Right cardiac atrium (tissue), 5 donors: ENCODE measurements at regions of chr4 and their contacts with region 1.

Region 1: GRCh38 chr4:47933840-47934239 is 19.5 kb upstream of the NFXL1 start:
- DNase-seq: no peak
- ATAC-seq: peak in 1 of 2 donors; percentile 45
- H3K4me3 ChIP-seq: no peak overlapping the region
- H3K27ac ChIP-seq: no peak overlapping the region
- H3K4me1 ChIP-seq: no peaks in the 10 kb centered on the region
- H3K27me3 ChIP-seq: no peaks in the 10 kb centered on the region

Region 2: GRCh38 chr4:47668810-47669408 is 264.9 kb before region 1 on chr4:
- intact Hi-C with region 1: loop called in 2 of 4 experiments (anchors 10 kb)
- DNase-seq: no peak
- ATAC-seq: peak; percentile 72 to 73
- H3K4me3 ChIP-seq: no peak overlapping the region
- H3K27ac ChIP-seq: no peak overlapping the region
- H3K4me1 ChIP-seq: no peaks in the 10 kb centered on the region
- H3K27me3 ChIP-seq: no peaks in the 10 kb centered on the region

Region 3: GRCh38 chr4:47686294-47686872 is 247.5 kb before region 1 on chr4:
- intact Hi-C with region 1: loop called in 2 of 4 experiments (anchors 10 kb)
- DNase-seq: peak; percentile 37 to 61 (median 56)
- ATAC-seq: peak; percentile 68 to 73
- H3K4me3 ChIP-seq: no peak overlapping the region
- H3K27ac ChIP-seq: no peak overlapping the region
- H3K4me1 ChIP-seq: no peaks in the 10 kb centered on the region
- H3K27me3 ChIP-seq: no peaks in the 10 kb centered on the region

Region 4: DNA sequence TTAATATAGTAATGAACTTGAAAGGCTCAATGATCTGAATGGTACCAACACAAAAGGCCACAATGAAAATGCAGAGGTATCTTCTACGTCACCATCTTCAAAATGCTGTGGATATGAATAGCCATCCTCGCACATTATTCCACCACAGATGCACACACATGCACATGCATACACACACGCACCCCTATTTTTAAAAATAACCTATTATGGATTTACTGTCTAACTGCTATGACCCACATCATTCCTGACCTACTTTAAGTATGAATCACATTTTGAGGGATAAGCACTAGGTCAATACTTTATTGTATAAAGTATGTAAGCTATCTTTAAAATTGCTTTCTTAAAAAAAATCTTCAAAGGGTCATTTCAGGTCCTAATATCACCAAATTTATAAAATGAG is 71.5 kb before region 1 on chr4:
- intact Hi-C with region 1: no loop called
- DNase-seq: no peak
- ATAC-seq: no peak
- H3K4me3 ChIP-seq: no peak overlapping the region
- H3K27ac ChIP-seq: no peak overlapping the region
- H3K4me1 ChIP-seq: no peaks in the 10 kb centered on the region
- H3K27me3 ChIP-seq: no peaks in the 10 kb centered on the region

Region 5: DNA sequence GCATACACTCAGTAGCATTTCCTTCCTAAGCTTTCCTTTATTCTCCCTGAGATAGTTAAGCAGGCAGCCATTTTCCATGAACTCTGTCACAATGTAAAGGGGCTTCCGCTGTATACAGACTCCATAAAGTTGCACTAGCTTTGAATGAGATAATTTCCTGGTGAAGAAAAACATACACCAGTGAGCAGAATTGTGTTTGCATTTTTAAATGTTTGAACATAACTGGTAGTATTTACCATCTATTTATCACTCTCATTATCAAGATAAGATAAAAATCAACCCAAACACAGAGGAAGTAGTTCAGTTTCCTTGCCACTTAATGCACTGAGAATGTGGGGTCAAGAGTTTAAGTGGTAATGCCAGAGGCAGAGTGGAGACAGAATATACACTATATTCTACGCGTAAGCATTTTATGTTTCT is 146.1 kb after region 1 on chr4:
- intact Hi-C with region 1: loop called in 1 of 4 experiments (anchors 10 kb)
- DNase-seq: no peak
- ATAC-seq: no peak
- H3K4me3 ChIP-seq: no peak overlapping the region
- H3K27ac ChIP-seq: no peak overlapping the region
- H3K4me1 ChIP-seq: no peaks in the 10 kb centered on the region
- H3K27me3 ChIP-seq: no peaks in the 10 kb centered on the region